ENCODE measurements at regions of chr17 and their contacts with region 1.

Region 1: GRCh38 chr17:55421179-55421934 is at the start of gene MMD:
- DNase-seq: no peak
- H3K4me3 Mint-ChIP-seq: peak within 1 kb of the TSS; percentile 93
- H3K27ac Mint-ChIP-seq: peak within 1 kb of the TSS; percentile 93
- H3K4me1 Mint-ChIP-seq: peaks cover 53% of the 10 kb centered on the region
- H3K27me3 Mint-ChIP-seq: peaks cover 19% of the 10 kb centered on the region
- total RNA-seq, gene MMD: 24.1 and 24.6 TPM in 2 replicates

Region 2: GRCh38 chr17:55264645-55265298 is 156.6 kb before region 1 on chr17 and contains the start of gene HLF:
- intact Hi-C with region 1: loop called (anchors 2 kb)
- DNase-seq: peak; percentile 72
- H3K4me3 Mint-ChIP-seq: peak within 1 kb of the TSS; percentile 69
- H3K27ac Mint-ChIP-seq: no peak within 1 kb of the TSS
- H3K4me1 Mint-ChIP-seq: peaks cover 14% of the 10 kb centered on the region
- H3K27me3 Mint-ChIP-seq: peaks cover 81% of the 10 kb centered on the region
- total RNA-seq, gene HLF: 0.36 and 0.54 TPM in 2 replicates

Region 3: DNA sequence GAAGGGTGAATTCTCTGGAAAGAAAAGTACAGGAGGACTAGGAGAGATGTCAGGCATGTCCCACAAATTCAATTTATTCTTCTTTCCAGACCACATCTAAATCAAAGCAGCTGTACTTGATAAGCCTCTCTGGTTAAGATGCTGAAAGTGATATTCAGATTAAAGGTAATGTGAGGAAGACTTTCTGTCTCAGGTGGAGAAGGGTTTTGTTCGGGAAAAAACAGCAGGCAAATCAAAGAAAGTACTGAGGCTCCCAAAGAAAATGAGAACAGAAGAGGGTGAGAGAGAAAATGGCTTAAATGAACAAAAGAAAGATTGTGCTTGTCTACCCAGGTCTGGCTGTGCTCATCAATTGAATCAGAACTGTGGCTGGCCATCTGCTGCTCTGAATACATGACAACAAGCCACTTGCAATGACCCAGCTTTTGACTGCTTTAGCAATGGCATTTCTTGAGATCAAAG is 55.3 kb before region 1 on chr17:
- intact Hi-C with region 1: no loop called
- DNase-seq: no peak
- H3K4me3 Mint-ChIP-seq: no peak overlapping the region
- H3K27ac Mint-ChIP-seq: no peak overlapping the region
- H3K4me1 Mint-ChIP-seq: peaks cover 4% of the 10 kb centered on the region
- H3K27me3 Mint-ChIP-seq: peaks cover 23% of the 10 kb centered on the region

Region 4: GRCh38 chr17:55433629-55434305 is 12.4 kb after region 1 on chr17:
- intact Hi-C with region 1: loop called (anchors 1 kb)
- DNase-seq: no peak
- H3K4me3 Mint-ChIP-seq: no peak overlapping the region
- H3K27ac Mint-ChIP-seq: no peak overlapping the region
- H3K4me1 Mint-ChIP-seq: peaks cover 47% of the 10 kb centered on the region
- H3K27me3 Mint-ChIP-seq: peaks cover 3% of the 10 kb centered on the region

Region 5: GRCh38 chr17:55513885-55514591 is 92.7 kb after region 1 on chr17:
- intact Hi-C with region 1: loop called (anchors 5 kb)
- DNase-seq: peak; percentile 56
- H3K4me3 Mint-ChIP-seq: no peak overlapping the region
- H3K27ac Mint-ChIP-seq: no peak overlapping the region
- H3K4me1 Mint-ChIP-seq: peaks cover 4% of the 10 kb centered on the region
- H3K27me3 Mint-ChIP-seq: peaks cover 9% of the 10 kb centered on the region

Region 6: GRCh38 chr17:55750750-55751657 is 329.6 kb after region 1 on chr17 and contains the start of gene PCTP:
- intact Hi-C with region 1: loop called (anchors 1 kb)
- DNase-seq: peak; percentile 85
- H3K4me3 Mint-ChIP-seq: peak within 1 kb of the TSS; percentile 87
- H3K27ac Mint-ChIP-seq: peak within 1 kb of the TSS; percentile 2
- H3K4me1 Mint-ChIP-seq: peaks cover 12% of the 10 kb centered on the region
- H3K27me3 Mint-ChIP-seq: peaks cover 23% of the 10 kb centered on the region
- total RNA-seq, gene PCTP: 7.7 and 8.4 TPM in 2 replicates